ENCODE measurements at regions of chr3 and their contacts with region 1.

Region 1: DNA sequence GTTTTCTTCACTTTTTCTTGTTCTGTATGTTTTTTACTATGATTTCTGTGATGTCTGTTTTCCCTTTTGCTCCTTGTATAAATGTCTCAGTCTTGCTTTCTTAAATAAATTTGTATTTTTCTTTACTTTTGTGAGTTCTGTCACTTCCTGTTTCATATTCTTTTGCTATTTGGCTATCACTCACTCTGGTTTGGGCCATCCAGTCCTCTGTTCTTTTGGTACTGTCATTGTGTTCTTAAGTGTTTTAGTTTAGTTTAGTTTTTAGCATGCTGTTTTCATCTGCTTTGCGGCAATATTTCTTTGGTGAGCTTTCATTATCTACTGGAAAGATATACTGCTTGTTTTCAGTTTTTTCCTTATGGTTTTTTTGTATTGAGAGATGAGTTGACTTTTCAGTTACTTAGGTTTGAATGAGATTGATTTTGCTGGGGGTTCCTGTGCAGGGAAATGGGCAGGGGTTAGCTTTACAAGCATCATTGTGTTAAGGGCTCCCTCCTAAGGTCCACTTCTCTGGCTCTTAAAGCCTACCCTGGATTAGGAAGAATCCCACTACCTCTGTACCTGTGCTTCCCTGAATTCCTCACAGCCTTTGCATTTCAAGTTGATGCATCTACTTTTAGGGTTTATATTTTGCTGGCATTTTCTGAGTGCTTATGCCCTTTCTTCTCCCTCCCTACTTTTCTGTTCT is 35.1 kb downstream of the PDCD6IP start:
- DNase-seq: no peak
- ATAC-seq: no peak
- H3K4me3 ChIP-seq: no peak overlapping the region
- H3K4me3 Mint-ChIP-seq: peak overlapping the region in 6 of 10 donors; percentile 7 to 51 (median 24)
- H3K27ac ChIP-seq: no peak overlapping the region
- H3K27ac Mint-ChIP-seq: peak overlapping the region in 8 of 9 donors; percentile 25 to 93 (median 78)
- H3K4me1 ChIP-seq: peaks cover 0 to 12% of the 10 kb centered on the region in 2 donors
- H3K4me1 Mint-ChIP-seq: peaks cover 17 to 55% (median 36%) of the 10 kb centered on the region in 7 donors
- H3K27me3 ChIP-seq: no peaks in the 10 kb centered on the region
- H3K27me3 Mint-ChIP-seq: no peaks in the 10 kb centered on the region

Region 2: GRCh38 chr3:33704891-33705290 is 128.7 kb before region 1 on chr3:
- CTCF ChIA-PET with region 1: no interaction called
- POLR2A ChIA-PET with region 1: no interaction called
- intact Hi-C with region 1: no loop called
- DNase-seq: no peak
- ATAC-seq: no peak
- H3K4me3 ChIP-seq: no peak overlapping the region
- H3K4me3 Mint-ChIP-seq: no peak overlapping the region
- H3K27ac ChIP-seq: no peak overlapping the region
- H3K27ac Mint-ChIP-seq: no peak overlapping the region
- H3K4me1 ChIP-seq: no peaks in the 10 kb centered on the region
- H3K4me1 Mint-ChIP-seq: peaks cover 6 to 65% (median 52%) of the 10 kb centered on the region in 7 donors
- H3K27me3 ChIP-seq: no peaks in the 10 kb centered on the region
- H3K27me3 Mint-ChIP-seq: no peaks in the 10 kb centered on the region

Region 3: GRCh38 chr3:33807190-33807589 is 26.4 kb before region 1 on chr3:
- CTCF ChIA-PET with region 1: no interaction called
- POLR2A ChIA-PET with region 1: no interaction called
- intact Hi-C with region 1: loop called in 1 of 2 experiments (anchors 2 kb)
- DNase-seq: no peak
- ATAC-seq: no peak
- H3K4me3 ChIP-seq: no peak overlapping the region
- H3K4me3 Mint-ChIP-seq: peak overlapping the region in 5 of 10 donors; percentile 10 to 65 (median 14)
- H3K27ac ChIP-seq: no peak overlapping the region
- H3K27ac Mint-ChIP-seq: peak overlapping the region in 5 of 9 donors; percentile 11 to 64 (median 42)
- H3K4me1 ChIP-seq: peaks cover 16 to 26% of the 10 kb centered on the region in 2 donors
- H3K4me1 Mint-ChIP-seq: peaks cover 53 to 89% (median 85%) of the 10 kb centered on the region in 7 donors
- H3K27me3 ChIP-seq: no peaks in the 10 kb centered on the region
- H3K27me3 Mint-ChIP-seq: no peaks in the 10 kb centered on the region

Region 4: DNA sequence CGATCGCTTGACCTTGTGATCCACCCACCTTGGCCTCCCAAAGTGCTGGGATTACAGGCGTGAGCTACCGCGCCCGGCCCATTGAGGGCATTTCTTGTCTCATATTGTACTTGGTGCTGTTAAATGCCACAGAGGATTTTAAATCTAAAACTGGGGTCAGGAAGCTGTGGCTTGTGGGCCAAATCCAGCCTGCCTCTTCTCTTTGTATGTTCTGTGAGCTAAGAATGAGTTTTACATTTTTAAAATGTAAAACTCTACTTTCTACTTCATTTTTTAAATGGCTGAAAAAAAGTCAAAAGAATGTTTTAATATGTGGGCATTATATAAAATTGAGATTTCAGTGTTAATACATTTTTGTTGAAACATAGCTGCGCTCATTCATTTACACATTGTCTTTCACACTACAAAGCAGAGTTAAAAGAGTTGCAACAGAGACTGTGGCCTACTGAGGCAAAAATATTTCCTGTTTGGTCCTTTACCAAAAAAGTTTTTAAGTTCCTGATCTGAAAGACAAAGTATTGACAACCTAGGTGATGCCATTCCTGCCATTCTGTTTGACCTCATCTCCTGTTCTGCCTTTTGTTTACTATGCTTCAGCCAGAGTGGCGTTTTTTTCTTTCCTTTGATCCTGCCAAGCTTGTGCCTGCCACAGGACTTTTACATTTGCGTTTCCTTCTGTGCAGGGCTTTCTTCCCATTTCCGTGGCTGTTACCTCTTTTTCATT is 15.2 kb after region 1 on chr3:
- CTCF ChIA-PET with region 1: no interaction called
- POLR2A ChIA-PET with region 1: no interaction called
- intact Hi-C with region 1: loop called in 1 of 2 experiments (anchors 2 kb)
- DNase-seq: peak in 7 of 9 donors; percentile 43 to 71 (median 63)
- ATAC-seq: peak; percentile 88
- H3K4me3 ChIP-seq: peak overlapping the region; percentile 31
- H3K4me3 Mint-ChIP-seq: peak overlapping the region; percentile 33 to 75 (median 60)
- H3K27ac ChIP-seq: peak overlapping the region; percentile 41
- H3K27ac Mint-ChIP-seq: peak overlapping the region; percentile 57 to 94 (median 83)
- H3K4me1 ChIP-seq: peaks cover 0 to 26% of the 10 kb centered on the region in 2 donors
- H3K4me1 Mint-ChIP-seq: peaks cover 19 to 64% (median 57%) of the 10 kb centered on the region in 7 donors
- H3K27me3 ChIP-seq: no peaks in the 10 kb centered on the region
- H3K27me3 Mint-ChIP-seq: no peaks in the 10 kb centered on the region